Activated naive CD8-positive, alpha-beta T cell treated with anti-CD3 and anti-CD28 coated beads, Interleukin-2, amount 10 ng/mL, durations not matched to agents 7 days and 5 days (primary cell): ENCODE measurements at regions of chr11 and their contacts with region 1.

Region 1: GRCh38 chr11:18634140-18635032 is at the start of gene SPTY2D1:
- DNase-seq: peak; percentile 96
- ATAC-seq: peak; percentile 94
- H3K4me3 Mint-ChIP-seq: peak within 1 kb of the TSS; percentile 91
- H3K27ac Mint-ChIP-seq: peak within 1 kb of the TSS; percentile 98
- H3K4me1 Mint-ChIP-seq: peaks cover 14% of the 10 kb centered on the region
- H3K27me3 Mint-ChIP-seq: no peaks in the 10 kb centered on the region
- total RNA-seq, gene SPTY2D1: 27.8 to 27.9 TPM

Region 2: GRCh38 chr11:18321980-18322711 is 312.2 kb before region 1 on chr11 and contains the starts of genes GTF2H1 and HPS5:
- POLR2A ChIA-PET with region 1: interaction called, 10 read pairs
- DNase-seq: peak; percentile 93
- ATAC-seq: peak; percentile 92
- H3K4me3 Mint-ChIP-seq: peak within 1 kb of the TSS; percentile 92
- H3K27ac Mint-ChIP-seq: peak within 1 kb of the TSS; percentile 99
- H3K4me1 Mint-ChIP-seq: peaks cover 51% of the 10 kb centered on the region
- H3K27me3 Mint-ChIP-seq: no peaks in the 10 kb centered on the region
- total RNA-seq, gene GTF2H1: 44.4 to 47.9 TPM
- total RNA-seq, gene HPS5: 16.1 to 17.8 TPM

Region 3: GRCh38 chr11:18526521-18527296 is 107.7 kb before region 1 on chr11 and contains the start of gene TSG101:
- POLR2A ChIA-PET with region 1: interaction called, 16 read pairs
- DNase-seq: peak; percentile 93
- ATAC-seq: peak; percentile 91
- H3K4me3 Mint-ChIP-seq: peak within 1 kb of the TSS; percentile 99
- H3K27ac Mint-ChIP-seq: peak within 1 kb of the TSS; percentile 100
- H3K4me1 Mint-ChIP-seq: peaks cover 24% of the 10 kb centered on the region
- H3K27me3 Mint-ChIP-seq: no peaks in the 10 kb centered on the region
- total RNA-seq, gene TSG101: 35.2 to 35.5 TPM

Region 4: GRCh38 chr11:18567081-18567480 is 67.3 kb before region 1 on chr11:
- POLR2A ChIA-PET with region 1: no interaction called
- DNase-seq: no peak
- ATAC-seq: no peak
- H3K4me3 Mint-ChIP-seq: no peak overlapping the region
- H3K27ac Mint-ChIP-seq: no peak overlapping the region
- H3K4me1 Mint-ChIP-seq: peaks cover 2% of the 10 kb centered on the region
- H3K27me3 Mint-ChIP-seq: no peaks in the 10 kb centered on the region

Region 5: DNA sequence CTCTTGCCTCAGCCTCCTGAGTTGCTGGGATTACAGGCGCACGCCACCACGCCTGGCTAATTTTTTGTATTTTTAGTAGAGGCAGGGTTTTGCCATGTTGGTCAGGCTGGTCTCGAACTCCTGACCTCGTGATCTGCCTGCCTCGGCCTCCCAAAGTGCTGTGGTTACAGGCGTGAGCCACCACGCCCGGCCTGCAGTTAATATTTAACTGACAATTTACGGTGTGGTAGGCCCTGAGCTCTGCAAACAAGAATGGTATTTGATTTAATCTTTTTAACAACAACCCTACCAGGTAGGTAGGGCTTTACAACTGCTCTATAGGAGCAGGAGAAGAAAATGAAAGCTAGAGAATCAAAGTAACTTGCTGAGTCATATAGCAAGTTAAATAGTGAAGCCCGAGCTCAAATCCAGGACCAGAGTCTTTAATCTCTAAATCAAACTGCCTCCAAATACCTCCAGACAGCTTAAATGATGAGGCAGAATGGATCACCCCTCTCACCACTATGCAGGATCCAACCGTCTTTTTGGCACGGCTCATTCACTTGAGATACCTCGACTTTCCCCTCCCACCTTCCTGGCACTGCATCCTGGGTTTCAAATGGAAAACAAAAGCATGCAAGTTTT is 55.3 kb before region 1 on chr11:
- POLR2A ChIA-PET with region 1: interaction called, 12 read pairs
- DNase-seq: no peak
- ATAC-seq: peak; percentile 78
- H3K4me3 Mint-ChIP-seq: peak overlapping the region; percentile 51
- H3K27ac Mint-ChIP-seq: peak overlapping the region; percentile 65
- H3K4me1 Mint-ChIP-seq: peaks cover 9% of the 10 kb centered on the region
- H3K27me3 Mint-ChIP-seq: no peaks in the 10 kb centered on the region

Region 6: GRCh38 chr11:18588297-18589252 is 45.8 kb before region 1 on chr11 and contains the start of gene UEVLD:
- POLR2A ChIA-PET with region 1: interaction called, 22 read pairs
- DNase-seq: peak; percentile 75
- ATAC-seq: peak; percentile 51
- H3K4me3 Mint-ChIP-seq: no peak within 1 kb of the TSS
- H3K27ac Mint-ChIP-seq: no peak within 1 kb of the TSS
- H3K4me1 Mint-ChIP-seq: peaks cover 7% of the 10 kb centered on the region
- H3K27me3 Mint-ChIP-seq: no peaks in the 10 kb centered on the region
- total RNA-seq, gene UEVLD: 16.4 to 16.5 TPM

Region 7: GRCh38 chr11:18615628-18616392 is 18.6 kb before region 1 on chr11:
- POLR2A ChIA-PET with region 1: interaction called, 50 read pairs
- DNase-seq: no peak
- ATAC-seq: peak; percentile 65
- H3K4me3 Mint-ChIP-seq: peak overlapping the region; percentile 24
- H3K27ac Mint-ChIP-seq: peak overlapping the region; percentile 63
- H3K4me1 Mint-ChIP-seq: peaks cover 36% of the 10 kb centered on the region
- H3K27me3 Mint-ChIP-seq: no peaks in the 10 kb centered on the region

Region 8: GRCh38 chr11:18657673-18658072 is 23.3 kb after region 1 on chr11:
- POLR2A ChIA-PET with region 1: no interaction called
- DNase-seq: no peak
- ATAC-seq: no peak
- H3K4me3 Mint-ChIP-seq: no peak overlapping the region
- H3K27ac Mint-ChIP-seq: no peak overlapping the region
- H3K4me1 Mint-ChIP-seq: peaks cover 2% of the 10 kb centered on the region
- H3K27me3 Mint-ChIP-seq: peaks cover 6% of the 10 kb centered on the region

Region 9: GRCh38 chr11:18768472-18768901 is 134.1 kb after region 1 on chr11:
- POLR2A ChIA-PET with region 1: no interaction called
- DNase-seq: no peak
- ATAC-seq: peak; percentile 50
- H3K4me3 Mint-ChIP-seq: no peak overlapping the region
- H3K27ac Mint-ChIP-seq: no peak overlapping the region
- H3K4me1 Mint-ChIP-seq: peaks cover 29% of the 10 kb centered on the region
- H3K27me3 Mint-ChIP-seq: peaks cover 13% of the 10 kb centered on the region